ENCODE measurements at regions of chr1 and their contacts with region 1.

Region 1: DNA sequence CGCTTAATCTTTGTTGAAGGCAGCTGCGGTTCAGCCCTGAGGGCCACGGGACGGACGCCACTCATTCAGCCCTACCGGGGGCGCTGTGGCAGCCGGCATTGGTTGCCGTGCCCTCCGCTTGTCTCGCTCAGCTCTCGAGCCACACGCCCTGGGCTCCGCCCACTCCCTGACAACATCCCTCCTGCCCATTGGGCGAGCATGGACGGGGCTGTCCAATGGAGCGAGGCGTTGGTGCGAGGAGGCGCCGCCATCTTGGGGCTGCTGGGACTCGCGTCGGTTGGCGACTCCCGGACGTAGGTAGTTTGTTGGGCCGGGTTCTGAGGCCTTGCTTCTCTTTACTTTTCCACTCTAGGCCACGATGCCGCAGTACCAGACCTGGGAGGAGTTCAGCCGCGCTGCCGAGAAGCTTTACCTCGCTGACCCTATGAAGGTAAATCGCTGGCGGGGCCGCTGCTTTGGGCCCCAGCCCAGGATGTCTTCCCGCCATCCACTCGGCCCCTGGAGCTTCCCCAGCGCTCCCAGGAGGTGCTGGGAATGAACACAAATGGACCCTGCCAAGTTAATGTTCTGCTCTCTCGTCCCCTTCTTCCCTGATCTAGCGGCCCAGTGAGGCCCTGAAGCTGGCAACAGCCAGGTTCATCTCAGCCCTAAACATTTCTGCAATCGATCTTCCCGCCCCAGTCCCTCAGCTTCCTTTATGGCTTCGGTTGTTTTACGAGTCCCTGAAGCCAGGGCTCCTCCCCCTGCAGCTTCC is at the start of gene SRP9:
- DNase-seq: peak; percentile 84
- H3K4me3 ChIP-seq: peak within 1 kb of the TSS; percentile 89
- CTCF ChIP-seq: peak; percentile 98

Region 2: GRCh38 chr1:225467193-225468020 is 310.4 kb before region 1 on chr1:
- CTCF ChIA-PET with region 1: interaction called, 10 read pairs
- POLR2A ChIA-PET with region 1: interaction called, 3 read pairs
- DNase-seq: no peak
- H3K4me3 ChIP-seq: no peak overlapping the region
- CTCF ChIP-seq: no peak

Region 3: GRCh38 chr1:225480825-225481434 is 296.8 kb before region 1 on chr1:
- CTCF ChIA-PET with region 1: interaction called, 332 read pairs
- POLR2A ChIA-PET with region 1: no interaction called
- DNase-seq: no peak
- H3K4me3 ChIP-seq: no peak overlapping the region
- CTCF ChIP-seq: peak; percentile 81

Region 4: GRCh38 chr1:225523263-225523950 is 254.4 kb before region 1 on chr1:
- CTCF ChIA-PET with region 1: interaction called, 13 read pairs
- POLR2A ChIA-PET with region 1: no interaction called
- DNase-seq: no peak
- H3K4me3 ChIP-seq: no peak overlapping the region
- CTCF ChIP-seq: no peak

Region 5: GRCh38 chr1:225559326-225559725 is 218.4 kb before region 1 on chr1:
- CTCF ChIA-PET with region 1: interaction called, 106 read pairs
- POLR2A ChIA-PET with region 1: no interaction called
- DNase-seq: no peak
- H3K4me3 ChIP-seq: no peak overlapping the region
- CTCF ChIP-seq: no peak

Region 6: GRCh38 chr1:225685476-225686176 is 92.1 kb before region 1 on chr1:
- CTCF ChIA-PET with region 1: no interaction called
- POLR2A ChIA-PET with region 1: no interaction called
- DNase-seq: no peak
- H3K4me3 ChIP-seq: no peak overlapping the region
- CTCF ChIP-seq: no peak

Region 7: GRCh38 chr1:225766967-225767633 is 10.7 kb before region 1 on chr1:
- CTCF ChIA-PET with region 1: interaction called, 35 read pairs
- POLR2A ChIA-PET with region 1: interaction called, 5 read pairs
- DNase-seq: peak; percentile 82
- H3K4me3 ChIP-seq: no peak overlapping the region
- CTCF ChIP-seq: no peak

Region 8: GRCh38 chr1:225911191-225912130 is 133.7 kb after region 1 on chr1:
- CTCF ChIA-PET with region 1: interaction called, 20 read pairs
- POLR2A ChIA-PET with region 1: no interaction called
- DNase-seq: no peak
- H3K4me3 ChIP-seq: no peak overlapping the region; the same call in 1 of the 2 replicates
- CTCF ChIP-seq: peak; percentile 77